ENCODE measurements at regions of chr6 and their contacts with region 1.

Region 1: GRCh38 chr6:31271641-31272357 is at the start of gene HLA-C:
- DNase-seq: peak; percentile 96
- H3K4me3 ChIP-seq: peak within 1 kb of the TSS; percentile 67 to 89 (median 70)
- H3K27ac ChIP-seq: peak within 1 kb of the TSS; percentile 76
- H3K4me1 ChIP-seq: peaks cover 5% of the 10 kb centered on the region
- H3K27me3 ChIP-seq: peaks cover 4% of the 10 kb centered on the region
- CTCF ChIP-seq: peak in 1 of 2 donors; percentile 36
- total RNA-seq, gene HLA-C: 82.5 to 256 TPM

Region 2: DNA sequence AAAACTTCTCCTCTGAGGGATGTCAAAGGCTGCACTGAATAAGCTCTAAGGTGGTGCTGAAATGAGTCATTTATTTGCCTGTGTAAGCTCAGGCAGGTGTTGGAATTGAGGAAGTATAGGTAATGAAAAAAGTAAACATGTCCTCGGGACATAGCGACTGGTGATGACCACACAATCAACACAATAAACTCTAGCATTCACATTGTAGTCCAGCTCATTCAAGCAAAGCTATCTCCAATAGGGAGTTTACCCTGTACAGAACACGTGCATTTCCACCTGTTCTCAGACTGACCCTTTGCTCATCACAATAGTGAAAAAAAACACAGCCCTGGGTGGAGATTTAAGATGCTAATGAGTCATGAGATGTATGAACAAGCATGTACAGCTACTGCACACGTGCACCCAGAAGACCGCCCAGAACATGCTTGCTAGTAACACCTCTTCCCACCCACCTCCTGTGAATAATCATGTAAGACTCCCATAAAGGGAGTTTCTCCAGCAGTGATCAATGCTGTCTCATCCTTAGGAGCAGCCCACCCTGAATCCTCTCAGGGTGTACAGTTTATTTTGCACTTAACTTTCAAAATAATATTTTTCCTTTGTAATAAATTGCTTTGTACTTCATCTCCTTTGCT is 68.3 kb before region 1 on chr6:
- CTCF ChIA-PET with region 1: no interaction called
- dilution Hi-C with region 1: no loop called
- in situ Hi-C with region 1: no loop called
- intact Hi-C with region 1: loop called (anchors 2 kb)
- DNase-seq: peak; percentile 85
- H3K4me3 ChIP-seq: peak overlapping the region; percentile 45 to 66 (median 49)
- H3K27ac ChIP-seq: peak overlapping the region; percentile 90
- H3K4me1 ChIP-seq: peaks cover 21% of the 10 kb centered on the region
- H3K27me3 ChIP-seq: no peaks in the 10 kb centered on the region
- CTCF ChIP-seq: no peak

Region 3: GRCh38 chr6:31225735-31226134 is 46.1 kb before region 1 on chr6:
- CTCF ChIA-PET with region 1: no interaction called
- dilution Hi-C with region 1: no loop called
- in situ Hi-C with region 1: no loop called
- intact Hi-C with region 1: no loop called
- DNase-seq: no peak
- H3K4me3 ChIP-seq: no peak overlapping the region
- H3K27ac ChIP-seq: no peak overlapping the region
- H3K4me1 ChIP-seq: no peaks in the 10 kb centered on the region
- H3K27me3 ChIP-seq: peaks cover 2% of the 10 kb centered on the region
- CTCF ChIP-seq: no peak

Region 4: GRCh38 chr6:31246050-31246521 is 25.7 kb before region 1 on chr6:
- CTCF ChIA-PET with region 1: no interaction called
- dilution Hi-C with region 1: no loop called
- in situ Hi-C with region 1: no loop called
- intact Hi-C with region 1: loop called (anchors 2 kb)
- DNase-seq: peak; percentile 95
- H3K4me3 ChIP-seq: no peak overlapping the region
- H3K27ac ChIP-seq: no peak overlapping the region
- H3K4me1 ChIP-seq: peaks cover 18% of the 10 kb centered on the region
- H3K27me3 ChIP-seq: no peaks in the 10 kb centered on the region
- CTCF ChIP-seq: no peak

Region 5: DNA sequence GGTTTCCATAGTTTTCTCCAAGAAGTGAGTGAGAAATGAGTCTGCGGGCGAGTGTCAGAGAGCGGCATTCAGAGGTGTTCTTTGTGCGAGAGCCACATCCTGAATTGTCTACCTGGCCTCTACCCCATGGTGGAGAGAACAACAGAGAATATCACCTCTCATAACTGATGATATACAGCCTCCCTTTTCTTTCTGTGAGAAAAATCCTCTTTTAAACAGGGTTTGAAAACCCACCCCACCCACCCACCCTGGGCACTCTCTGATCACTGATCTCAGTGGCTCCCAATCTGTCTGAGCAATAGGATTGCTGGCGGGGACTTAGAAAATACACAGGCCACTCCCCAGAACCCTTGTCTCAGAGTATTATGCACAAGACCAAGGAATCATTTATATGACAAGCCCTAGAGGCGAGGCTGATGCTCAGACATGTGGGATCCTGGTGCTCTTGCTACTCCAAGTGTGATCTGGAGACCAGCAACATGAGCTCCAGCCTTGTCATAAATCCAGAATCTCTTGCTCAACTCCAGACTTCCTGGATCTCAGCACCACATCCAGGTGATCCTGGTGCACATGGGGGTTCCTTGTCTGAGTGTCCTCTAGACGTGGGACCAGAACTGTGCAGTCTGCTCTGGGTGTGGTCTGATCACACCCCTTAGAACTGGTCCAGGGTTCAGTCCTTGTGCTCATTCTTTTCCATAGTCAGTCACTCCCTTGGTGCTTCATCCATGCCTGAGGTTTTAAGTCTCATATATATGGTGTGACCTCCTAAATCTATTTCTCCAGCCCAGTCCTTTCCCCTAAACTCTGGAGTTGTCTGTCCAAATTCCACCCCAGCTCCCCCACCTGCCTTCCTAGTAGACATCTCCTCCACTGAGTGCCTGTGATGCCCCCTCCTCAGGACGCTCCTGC is 79.9 kb after region 1 on chr6:
- CTCF ChIA-PET with region 1: no interaction called
- dilution Hi-C with region 1: no loop called
- in situ Hi-C with region 1: loop called in 1 of 2 experiments (anchors 5 kb)
- intact Hi-C with region 1: no loop called
- DNase-seq: no peak
- H3K4me3 ChIP-seq: no peak overlapping the region
- H3K27ac ChIP-seq: no peak overlapping the region
- H3K4me1 ChIP-seq: no peaks in the 10 kb centered on the region
- H3K27me3 ChIP-seq: no peaks in the 10 kb centered on the region
- CTCF ChIP-seq: no peak

Region 6: DNA sequence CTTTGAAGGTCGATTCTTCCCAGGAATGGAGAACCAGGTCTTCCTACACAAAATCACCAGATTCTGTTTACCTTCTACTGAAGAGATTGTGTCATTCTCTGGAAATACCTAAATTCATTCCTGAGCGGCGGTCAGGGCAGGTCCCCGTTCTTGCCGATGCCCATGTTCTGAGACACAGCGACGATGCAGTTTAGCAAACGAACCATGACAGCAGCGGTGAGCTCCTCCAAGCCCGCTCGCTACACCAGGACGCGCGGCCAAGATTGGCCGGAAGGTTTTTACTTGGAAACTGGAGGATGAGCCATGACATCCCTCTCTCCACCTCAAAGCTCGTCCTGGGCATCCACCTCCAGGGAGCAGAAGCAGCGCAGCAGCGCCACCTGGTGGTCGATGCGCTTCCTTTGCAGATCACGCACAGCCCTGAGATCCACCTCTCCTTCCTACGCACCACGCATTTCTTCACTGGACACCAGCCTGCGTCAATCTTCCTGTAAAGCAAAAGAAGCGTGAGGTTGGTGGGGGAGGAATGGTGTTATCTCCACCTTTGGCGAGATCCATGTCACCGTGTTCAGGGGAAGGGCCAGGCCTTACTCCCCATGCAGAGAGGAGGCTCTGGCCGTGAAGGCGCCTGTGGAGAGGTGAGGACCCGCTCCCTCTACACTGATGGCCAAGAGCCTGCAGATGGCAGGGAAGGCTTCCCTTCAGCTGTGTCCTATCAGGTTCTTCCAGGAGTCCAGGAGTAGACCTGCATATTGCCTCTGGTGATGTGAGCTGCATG is 95.1 kb after region 1 on chr6:
- CTCF ChIA-PET with region 1: no interaction called
- dilution Hi-C with region 1: no loop called
- in situ Hi-C with region 1: no loop called
- intact Hi-C with region 1: loop called (anchors 1 kb)
- DNase-seq: peak; percentile 85
- H3K4me3 ChIP-seq: peak overlapping the region in 2 of 3 experiments; percentile 23 to 44
- H3K27ac ChIP-seq: no peak overlapping the region
- H3K4me1 ChIP-seq: peaks cover 4% of the 10 kb centered on the region
- H3K27me3 ChIP-seq: peaks cover 2% of the 10 kb centered on the region
- CTCF ChIP-seq: peak; percentile 71 to 91

Measured in mammary epithelial cell (primary cell).